AG04449 (cell line): ENCODE measurements at regions of chr6 and their contacts with region 1.

Region 1: DNA sequence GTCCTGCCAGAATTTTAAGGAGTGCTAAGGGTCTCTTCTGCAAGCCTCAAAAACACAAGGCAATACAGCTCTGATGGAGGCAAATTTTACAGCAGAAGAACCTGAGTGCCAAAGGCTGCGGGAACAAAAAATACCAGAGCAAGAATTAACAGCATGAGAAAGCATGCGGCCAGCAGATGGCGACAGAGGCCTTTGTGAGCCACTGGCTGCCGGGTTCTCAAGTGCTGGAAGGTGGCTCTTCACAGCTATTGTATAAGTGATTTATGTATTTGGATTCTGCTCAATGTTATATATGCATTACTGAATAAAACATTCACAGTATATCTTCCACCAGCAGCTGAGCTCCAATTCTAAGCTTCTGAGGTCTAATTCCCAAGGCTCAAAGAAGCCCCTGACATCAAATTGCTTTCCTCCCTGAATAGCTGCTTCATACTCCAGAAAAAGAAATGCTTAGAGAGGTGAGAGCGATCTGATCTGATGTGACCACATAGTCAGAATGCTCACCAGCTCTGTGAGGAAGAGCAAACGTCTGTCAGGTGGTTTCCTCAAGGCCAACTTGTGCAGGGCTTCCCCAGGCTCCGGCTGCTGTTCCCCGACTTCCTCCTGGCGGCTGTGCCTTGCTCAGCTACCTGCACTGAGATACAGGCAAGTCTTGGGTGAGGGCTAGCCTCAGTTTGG is 58.6 kb downstream of the PPP1R3G start:
- DNase-seq: no peak
- H3K4me3 ChIP-seq: no peak overlapping the region
- CTCF ChIP-seq: peak; percentile 86

Region 2: GRCh38 chr6:4901386-4902061 is 242.2 kb before region 1 on chr6:
- CTCF ChIA-PET with region 1: no interaction called
- POLR2A ChIA-PET with region 1: no interaction called
- DNase-seq: no peak
- H3K4me3 ChIP-seq: no peak overlapping the region
- CTCF ChIP-seq: no peak

Region 3: GRCh38 chr6:5132731-5133341 is 10.9 kb before region 1 on chr6:
- CTCF ChIA-PET with region 1: interaction called, 29 read pairs
- POLR2A ChIA-PET with region 1: no interaction called
- DNase-seq: peak; percentile 53
- H3K4me3 ChIP-seq: no peak overlapping the region
- CTCF ChIP-seq: no peak

Region 4: GRCh38 chr6:5205877-5206850 is 62.4 kb after region 1 on chr6:
- CTCF ChIA-PET with region 1: interaction called, 75 read pairs
- POLR2A ChIA-PET with region 1: no interaction called
- DNase-seq: peak; percentile 29
- H3K4me3 ChIP-seq: no peak overlapping the region
- CTCF ChIP-seq: no peak

Region 5: GRCh38 chr6:5250911-5251310 is 107.1 kb after region 1 on chr6:
- CTCF ChIA-PET with region 1: interaction called, 12 read pairs
- POLR2A ChIA-PET with region 1: no interaction called
- DNase-seq: no peak
- H3K4me3 ChIP-seq: no peak overlapping the region
- CTCF ChIP-seq: no peak

Region 6: DNA sequence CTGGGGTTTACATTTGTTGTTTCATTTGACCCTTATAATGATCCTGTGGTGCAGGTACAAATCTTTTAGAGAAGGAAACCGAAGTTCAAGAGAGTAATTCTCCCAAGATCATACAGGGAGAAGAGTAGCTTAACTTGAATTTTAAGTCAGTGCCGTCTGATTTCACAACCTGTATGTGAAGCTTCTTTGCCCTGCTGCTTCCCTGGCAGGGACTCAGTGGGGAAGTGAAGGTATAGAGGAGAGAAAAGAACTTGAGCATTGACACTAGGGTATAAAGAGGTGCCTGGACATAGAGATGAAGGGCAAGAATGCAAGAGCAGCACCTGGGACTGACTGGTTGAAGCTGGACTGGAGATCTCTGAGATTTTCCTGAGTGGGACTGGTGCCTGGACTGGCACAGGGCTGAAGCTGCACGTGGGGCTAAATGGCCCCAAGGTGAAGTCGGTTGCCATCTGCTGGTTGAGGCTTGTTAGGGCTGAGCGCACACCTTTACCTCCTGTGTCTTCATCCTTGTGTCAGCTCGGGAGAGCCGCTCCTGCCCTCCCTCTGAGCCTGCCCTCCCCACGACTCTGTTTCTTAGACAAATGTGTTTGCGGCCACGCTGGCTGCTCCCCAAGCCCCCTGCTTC is 159.3 kb after region 1 on chr6:
- CTCF ChIA-PET with region 1: interaction called, 20 read pairs
- POLR2A ChIA-PET with region 1: no interaction called
- DNase-seq: no peak
- H3K4me3 ChIP-seq: no peak overlapping the region
- CTCF ChIP-seq: peak; percentile 40

Region 7: GRCh38 chr6:5401845-5402738 is 258.3 kb after region 1 on chr6:
- CTCF ChIA-PET with region 1: interaction called, 129 read pairs
- POLR2A ChIA-PET with region 1: no interaction called
- DNase-seq: no peak
- H3K4me3 ChIP-seq: no peak overlapping the region
- CTCF ChIP-seq: no peak